Dendritic cell treated with granulocyte-macrophage colony-stimulating factor and Interleukin-4, amounts not matched to agents 40 ng/mL and 50 ng/mL, for 4 days (primary cell): ENCODE measurements at regions of chr3 and their contacts with region 1.

Region 1: GRCh38 chr3:30199096-30199759 is 407.2 kb upstream of the TGFBR2 start:
- H3K4me3 Mint-ChIP-seq: no peak overlapping the region
- H3K27ac Mint-ChIP-seq: no peak overlapping the region
- H3K4me1 Mint-ChIP-seq: no peaks in the 10 kb centered on the region
- H3K27me3 Mint-ChIP-seq: no peaks in the 10 kb centered on the region

Region 2: DNA sequence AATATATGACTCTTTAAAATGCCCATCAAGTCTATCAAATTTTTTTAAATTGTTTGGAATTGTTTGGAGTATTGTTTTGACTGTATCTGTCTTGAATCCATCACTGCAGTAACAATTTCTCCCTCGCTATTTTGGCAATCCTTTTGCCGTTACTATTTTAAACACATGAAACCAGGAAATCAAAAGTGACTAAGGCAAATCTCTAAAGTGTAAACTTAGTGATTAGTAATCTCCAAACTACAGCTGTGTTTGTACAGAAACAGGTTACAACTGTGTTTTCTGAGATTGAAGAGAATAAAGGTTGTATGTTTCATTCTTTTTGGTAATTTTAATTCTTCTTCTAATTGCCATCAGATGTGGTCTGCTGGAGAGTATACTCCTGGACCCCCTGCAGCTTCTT is 453.1 kb before region 1 on chr3:
- intact Hi-C with region 1: no loop called
- H3K4me3 Mint-ChIP-seq: no peak overlapping the region
- H3K27ac Mint-ChIP-seq: no peak overlapping the region
- H3K4me1 Mint-ChIP-seq: no peaks in the 10 kb centered on the region
- H3K27me3 Mint-ChIP-seq: peaks cover 2% of the 10 kb centered on the region

Region 3: GRCh38 chr3:30012941-30013543 is 186.2 kb before region 1 on chr3:
- intact Hi-C with region 1: loop called (anchors 1 kb)
- H3K4me3 Mint-ChIP-seq: no peak overlapping the region
- H3K27ac Mint-ChIP-seq: no peak overlapping the region
- H3K4me1 Mint-ChIP-seq: no peaks in the 10 kb centered on the region
- H3K27me3 Mint-ChIP-seq: no peaks in the 10 kb centered on the region

Region 4: GRCh38 chr3:30042274-30042859 is 156.9 kb before region 1 on chr3:
- intact Hi-C with region 1: loop called (anchors 1 kb)
- H3K4me3 Mint-ChIP-seq: no peak overlapping the region
- H3K27ac Mint-ChIP-seq: no peak overlapping the region
- H3K4me1 Mint-ChIP-seq: peaks cover 31% of the 10 kb centered on the region
- H3K27me3 Mint-ChIP-seq: no peaks in the 10 kb centered on the region

Region 5: GRCh38 chr3:30112902-30113484 is 86.2 kb before region 1 on chr3:
- intact Hi-C with region 1: loop called (anchors 2 kb)
- H3K4me3 Mint-ChIP-seq: no peak overlapping the region
- H3K27ac Mint-ChIP-seq: no peak overlapping the region
- H3K4me1 Mint-ChIP-seq: peaks cover 9% of the 10 kb centered on the region
- H3K27me3 Mint-ChIP-seq: peaks cover 5% of the 10 kb centered on the region

Region 6: GRCh38 chr3:30353711-30354467 is 154.7 kb after region 1 on chr3:
- intact Hi-C with region 1: no loop called
- H3K4me3 Mint-ChIP-seq: no peak overlapping the region
- H3K27ac Mint-ChIP-seq: no peak overlapping the region
- H3K4me1 Mint-ChIP-seq: no peaks in the 10 kb centered on the region
- H3K27me3 Mint-ChIP-seq: no peaks in the 10 kb centered on the region